ENCODE measurements at regions of chr9 and their contacts with region 1.

Region 1: DNA sequence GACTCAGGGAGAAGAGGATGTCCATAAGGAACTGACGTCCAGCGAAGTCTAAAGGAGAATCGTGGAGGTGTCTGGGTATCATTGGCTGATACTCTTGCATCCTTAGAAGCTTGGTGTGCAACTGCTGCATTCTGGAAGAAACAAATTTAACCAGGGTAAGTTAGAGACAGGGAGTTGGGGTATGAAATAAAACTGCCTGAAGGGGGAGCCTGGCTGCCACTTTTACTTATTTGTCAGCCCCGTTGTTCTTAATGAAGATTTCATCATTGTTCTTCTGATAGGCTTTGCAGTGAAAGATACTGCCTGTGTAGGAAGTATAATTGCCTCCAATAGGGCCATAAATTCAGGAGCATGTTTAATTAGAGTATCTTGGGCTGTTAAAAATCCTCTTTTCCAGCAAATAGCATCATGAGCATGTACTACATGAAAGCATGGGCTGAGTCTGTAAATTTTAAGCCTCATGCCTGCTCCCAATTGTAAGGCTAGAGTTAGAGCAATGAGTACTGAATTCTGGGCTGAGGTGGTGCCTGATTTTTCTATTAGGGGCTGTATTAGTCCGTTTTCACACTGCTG is 1264.5 kb upstream of the ACO1 start:
- DNase-seq: peak; percentile 52
- H3K4me3 Mint-ChIP-seq: no peak overlapping the region
- H3K27ac Mint-ChIP-seq: no peak overlapping the region
- H3K4me1 Mint-ChIP-seq: peaks cover 5% of the 10 kb centered on the region
- H3K27me3 Mint-ChIP-seq: no peaks in the 10 kb centered on the region

Region 2: DNA sequence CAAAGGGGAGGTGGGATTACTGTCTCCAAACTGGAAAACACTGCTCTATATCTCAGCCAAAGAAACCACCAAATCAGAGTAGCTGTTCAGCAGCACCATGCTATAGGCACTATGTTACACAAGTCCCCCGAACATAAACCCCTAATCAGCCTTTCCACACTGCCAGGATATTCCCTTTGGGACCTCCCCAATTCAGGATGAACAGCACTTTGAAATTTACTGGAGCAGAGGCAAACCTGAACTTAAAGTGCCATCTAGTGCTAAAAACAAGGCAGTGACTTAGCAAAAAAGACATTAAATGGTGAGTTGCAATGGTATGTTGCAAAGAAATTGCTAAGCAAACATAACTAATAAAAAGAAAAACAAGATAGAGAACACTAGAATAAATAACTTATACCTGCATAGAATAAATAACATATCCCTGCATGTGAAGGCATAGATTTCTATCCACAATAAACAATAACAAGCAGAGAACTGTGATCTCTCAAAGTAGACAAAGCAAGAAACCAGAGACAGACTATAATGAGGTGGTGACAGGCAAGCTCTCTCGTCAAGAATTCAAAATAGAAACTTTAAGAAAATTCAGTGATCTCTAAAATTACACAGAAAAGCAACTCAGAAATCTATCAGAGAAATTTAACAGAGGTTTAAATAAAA is 680.1 kb after region 1 on chr9:
- CTCF ChIA-PET with region 1: interaction called, 6 read pairs
- intact Hi-C with region 1: loop called (anchors 1 kb)
- DNase-seq: no peak
- H3K4me3 Mint-ChIP-seq: no peak overlapping the region
- H3K27ac Mint-ChIP-seq: no peak overlapping the region
- H3K4me1 Mint-ChIP-seq: peaks cover 10% of the 10 kb centered on the region
- H3K27me3 Mint-ChIP-seq: peaks cover 2% of the 10 kb centered on the region